ENCODE measurements at regions of chr3 and their contacts with region 1.

Region 1: GRCh38 chr3:50542177-50543034 is 25.1 kb downstream of the C3orf18 start:
- DNase-seq: peak in 4 of 5 donors; percentile 81 to 86 (median 84)
- H3K4me3 ChIP-seq: no peak overlapping the region
- H3K27ac ChIP-seq: no peak overlapping the region
- H3K4me1 ChIP-seq: no peaks in the 10 kb centered on the region
- H3K27me3 ChIP-seq: no peaks in the 10 kb centered on the region
- CTCF ChIP-seq: peak; percentile 97

Region 2: GRCh38 chr3:50314342-50314741 is 228.1 kb before region 1 on chr3:
- intact Hi-C with region 1: no loop called
- DNase-seq: no peak
- H3K4me3 ChIP-seq: no peak overlapping the region
- H3K27ac ChIP-seq: no peak overlapping the region
- H3K4me1 ChIP-seq: peaks cover 0 to 19% (median 6%) of the 10 kb centered on the region in 3 donors
- H3K27me3 ChIP-seq: no peaks in the 10 kb centered on the region
- CTCF ChIP-seq: no peak

Region 3: GRCh38 chr3:50347194-50347918 is 195.1 kb before region 1 on chr3:
- intact Hi-C with region 1: loop called (anchors 5 kb)
- DNase-seq: peak; percentile 82 to 90 (median 85)
- H3K4me3 ChIP-seq: peak overlapping the region in 1 of 3 donors; percentile 11
- H3K27ac ChIP-seq: no peak overlapping the region
- H3K4me1 ChIP-seq: peaks cover 0 to 33% (median 14%) of the 10 kb centered on the region in 3 donors
- H3K27me3 ChIP-seq: no peaks in the 10 kb centered on the region
- CTCF ChIP-seq: peak; percentile 69

Region 4: DNA sequence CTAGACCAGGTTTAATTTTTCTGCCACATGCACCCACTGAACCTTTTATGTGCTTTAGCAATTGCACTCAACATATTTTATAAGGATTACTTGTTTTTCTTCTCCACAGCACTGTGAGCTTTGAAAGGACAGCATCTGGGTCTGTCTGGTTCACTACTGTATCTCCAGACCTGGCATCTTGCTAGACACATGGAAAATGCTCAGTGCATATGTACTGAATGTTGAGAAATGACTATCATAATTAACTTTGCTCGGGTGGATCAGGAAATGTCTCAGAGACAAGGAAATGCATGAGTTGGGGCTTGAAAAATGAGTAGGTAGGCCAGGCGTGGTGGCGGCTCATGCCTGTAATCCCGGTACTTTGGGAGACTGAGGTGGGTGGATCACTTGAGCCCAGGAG is 172.5 kb after region 1 on chr3:
- intact Hi-C with region 1: no loop called
- DNase-seq: peak in 1 of 5 donors; percentile 34
- H3K4me3 ChIP-seq: no peak overlapping the region
- H3K27ac ChIP-seq: no peak overlapping the region
- H3K4me1 ChIP-seq: no peaks in the 10 kb centered on the region
- H3K27me3 ChIP-seq: no peaks in the 10 kb centered on the region
- CTCF ChIP-seq: no peak

Region 5: DNA sequence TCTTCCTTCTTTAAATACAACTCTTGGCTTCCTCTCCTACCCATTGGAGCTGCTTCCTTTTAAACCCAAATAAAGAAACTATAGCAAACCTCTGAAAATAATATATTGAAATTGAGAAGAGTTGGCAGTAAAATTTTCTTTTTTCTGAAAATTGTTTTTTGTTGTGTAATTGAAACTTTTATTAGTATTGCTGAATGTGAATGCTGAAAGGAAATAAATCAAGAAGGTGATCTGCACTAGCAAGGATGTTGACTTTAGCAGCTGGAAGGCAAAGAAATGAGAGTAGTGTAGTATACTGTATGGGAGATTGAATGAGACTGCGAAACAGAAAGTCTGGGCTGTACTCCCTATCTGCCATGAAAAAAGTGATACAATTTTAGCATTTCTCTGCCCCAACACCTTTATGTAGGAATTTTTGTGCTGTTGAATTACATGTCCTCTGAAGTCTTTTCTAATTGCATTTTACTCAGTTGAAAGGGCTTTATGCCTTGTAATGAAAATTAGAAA is 298.6 kb after region 1 on chr3:
- intact Hi-C with region 1: no loop called
- DNase-seq: no peak
- H3K4me3 ChIP-seq: no peak overlapping the region
- H3K27ac ChIP-seq: no peak overlapping the region
- H3K4me1 ChIP-seq: no peaks in the 10 kb centered on the region
- H3K27me3 ChIP-seq: no peaks in the 10 kb centered on the region
- CTCF ChIP-seq: no peak